ENCODE measurements at regions of chr12 and their contacts with region 1.

Region 1: DNA sequence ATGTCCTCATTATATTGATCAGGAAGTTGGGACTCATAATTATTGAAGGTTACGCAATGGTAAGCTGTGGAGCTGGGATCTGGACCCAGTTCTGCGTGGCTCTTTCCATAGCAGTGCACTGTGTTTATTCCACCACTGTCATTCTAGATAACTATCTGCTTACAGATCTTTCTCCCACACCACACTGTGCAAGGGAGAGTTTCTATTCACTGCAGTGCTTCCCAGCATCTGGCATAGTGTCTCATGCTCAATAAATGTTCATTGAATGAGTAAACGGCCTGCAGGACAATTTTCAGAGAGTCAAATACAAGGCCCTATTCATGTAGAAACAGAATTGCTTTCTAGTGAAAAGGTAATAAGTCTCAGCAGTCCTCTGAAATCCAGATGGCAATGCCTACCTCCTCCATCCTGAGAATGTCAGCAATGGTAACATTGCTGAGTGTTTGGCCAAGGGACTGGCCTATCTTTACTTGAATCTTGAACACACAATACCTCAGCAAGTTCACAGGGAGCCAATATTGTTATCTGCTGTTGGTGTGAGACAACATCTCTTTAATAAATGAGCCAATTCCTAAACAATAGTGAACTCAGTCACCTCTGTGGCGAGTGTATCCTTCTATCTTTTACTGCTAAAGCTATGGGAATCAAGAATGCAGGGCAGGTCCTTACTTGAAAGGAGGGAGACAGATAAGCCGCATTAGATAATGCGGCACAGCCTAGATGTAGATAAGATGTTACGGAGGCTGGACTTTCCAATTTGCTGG is 332.4 kb upstream of the PRICKLE1 start:
- DNase-seq: peak; percentile 83 to 89
- H3K4me3 ChIP-seq: no peak overlapping the region
- H3K4me3 Mint-ChIP-seq: peak overlapping the region; percentile 55
- H3K27ac Mint-ChIP-seq: peak overlapping the region; percentile 91
- H3K4me1 ChIP-seq: peaks cover 41% of the 10 kb centered on the region
- H3K4me1 Mint-ChIP-seq: peaks cover 35% of the 10 kb centered on the region
- H3K27me3 ChIP-seq: no peaks in the 10 kb centered on the region
- H3K27me3 Mint-ChIP-seq: no peaks in the 10 kb centered on the region
- CTCF ChIP-seq: no peak

Region 2: GRCh38 chr12:42482445-42483237 is 439.3 kb before region 1 on chr12:
- CTCF ChIA-PET with region 1: no interaction called
- POLR2A ChIA-PET with region 1: no interaction called
- intact Hi-C with region 1: loop called (anchors 5 kb)
- DNase-seq: peak; percentile 72 to 90
- H3K4me3 ChIP-seq: peak overlapping the region; percentile 54
- H3K4me3 Mint-ChIP-seq: peak overlapping the region; percentile 92
- H3K27ac Mint-ChIP-seq: no peak overlapping the region
- H3K4me1 ChIP-seq: peaks cover 6% of the 10 kb centered on the region; the same call in 1 of the 2 replicates
- H3K4me1 Mint-ChIP-seq: no peaks in the 10 kb centered on the region
- H3K27me3 ChIP-seq: no peaks in the 10 kb centered on the region
- H3K27me3 Mint-ChIP-seq: no peaks in the 10 kb centered on the region
- CTCF ChIP-seq: peak; percentile 82 to 89

Region 3: GRCh38 chr12:42859612-42860011 is 62.3 kb before region 1 on chr12:
- CTCF ChIA-PET with region 1: no interaction called
- POLR2A ChIA-PET with region 1: no interaction called
- intact Hi-C with region 1: no loop called
- DNase-seq: no peak
- H3K4me3 ChIP-seq: no peak overlapping the region
- H3K4me3 Mint-ChIP-seq: no peak overlapping the region
- H3K27ac Mint-ChIP-seq: no peak overlapping the region
- H3K4me1 ChIP-seq: peaks cover 8% of the 10 kb centered on the region; the same call in 1 of the 2 replicates
- H3K4me1 Mint-ChIP-seq: peaks cover 7% of the 10 kb centered on the region
- H3K27me3 ChIP-seq: no peaks in the 10 kb centered on the region
- H3K27me3 Mint-ChIP-seq: no peaks in the 10 kb centered on the region
- CTCF ChIP-seq: no peak

Region 4: GRCh38 chr12:42961395-42961794 is 39.5 kb after region 1 on chr12:
- CTCF ChIA-PET with region 1: no interaction called
- POLR2A ChIA-PET with region 1: interaction called, 3 read pairs
- intact Hi-C with region 1: loop called (anchors 1 kb)
- DNase-seq: peak; percentile 80 to 91
- H3K4me3 ChIP-seq: no peak overlapping the region
- H3K4me3 Mint-ChIP-seq: no peak overlapping the region
- H3K27ac Mint-ChIP-seq: peak overlapping the region; percentile 88
- H3K4me1 ChIP-seq: peaks cover 43% of the 10 kb centered on the region
- H3K4me1 Mint-ChIP-seq: peaks cover 22% of the 10 kb centered on the region
- H3K27me3 ChIP-seq: no peaks in the 10 kb centered on the region
- H3K27me3 Mint-ChIP-seq: no peaks in the 10 kb centered on the region
- CTCF ChIP-seq: no peak

Region 5: DNA sequence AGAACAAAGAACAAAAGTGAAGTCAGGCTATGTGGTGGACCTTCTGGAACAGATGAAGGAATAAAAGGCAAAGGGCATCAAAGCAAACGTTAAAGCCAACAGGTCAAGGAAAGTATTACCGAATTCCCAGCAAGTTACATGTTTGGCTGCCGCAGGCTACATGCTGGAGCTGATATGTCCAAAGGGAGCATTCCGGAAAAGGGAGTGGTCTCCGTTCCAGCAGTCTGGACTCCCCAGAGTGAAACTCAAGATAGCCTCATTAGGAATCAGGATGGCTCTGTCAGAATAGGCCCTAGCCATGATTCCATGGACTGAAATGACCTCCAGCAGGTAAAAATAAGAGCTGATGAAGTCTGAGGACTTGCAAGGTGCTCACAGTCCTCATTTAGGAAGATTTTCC is 47.4 kb after region 1 on chr12:
- CTCF ChIA-PET with region 1: no interaction called
- POLR2A ChIA-PET with region 1: no interaction called
- intact Hi-C with region 1: loop called (anchors 2 kb)
- DNase-seq: peak; percentile 71 to 92
- H3K4me3 ChIP-seq: no peak overlapping the region
- H3K4me3 Mint-ChIP-seq: no peak overlapping the region
- H3K27ac Mint-ChIP-seq: peak overlapping the region; percentile 72
- H3K4me1 ChIP-seq: peaks cover 29% of the 10 kb centered on the region
- H3K4me1 Mint-ChIP-seq: no peaks in the 10 kb centered on the region
- H3K27me3 ChIP-seq: no peaks in the 10 kb centered on the region
- H3K27me3 Mint-ChIP-seq: no peaks in the 10 kb centered on the region
- CTCF ChIP-seq: no peak

Region 6: GRCh38 chr12:43338848-43339526 is 417.1 kb after region 1 on chr12:
- CTCF ChIA-PET with region 1: no interaction called
- POLR2A ChIA-PET with region 1: no interaction called
- intact Hi-C with region 1: loop called (anchors 5 kb)
- DNase-seq: peak in 1 of 2 experiments; percentile 20
- H3K4me3 ChIP-seq: no peak overlapping the region
- H3K4me3 Mint-ChIP-seq: no peak overlapping the region
- H3K27ac Mint-ChIP-seq: no peak overlapping the region
- H3K4me1 ChIP-seq: no peaks in the 10 kb centered on the region
- H3K4me1 Mint-ChIP-seq: no peaks in the 10 kb centered on the region
- H3K27me3 ChIP-seq: no peaks in the 10 kb centered on the region
- H3K27me3 Mint-ChIP-seq: no peaks in the 10 kb centered on the region
- CTCF ChIP-seq: peak in 1 of 2 experiments; percentile 69

Measured in Caco-2 (cell line).